Transverse colon (tissue), 4 donors: ENCODE measurements at regions of chr17 and their contacts with region 1.

Region 1: DNA sequence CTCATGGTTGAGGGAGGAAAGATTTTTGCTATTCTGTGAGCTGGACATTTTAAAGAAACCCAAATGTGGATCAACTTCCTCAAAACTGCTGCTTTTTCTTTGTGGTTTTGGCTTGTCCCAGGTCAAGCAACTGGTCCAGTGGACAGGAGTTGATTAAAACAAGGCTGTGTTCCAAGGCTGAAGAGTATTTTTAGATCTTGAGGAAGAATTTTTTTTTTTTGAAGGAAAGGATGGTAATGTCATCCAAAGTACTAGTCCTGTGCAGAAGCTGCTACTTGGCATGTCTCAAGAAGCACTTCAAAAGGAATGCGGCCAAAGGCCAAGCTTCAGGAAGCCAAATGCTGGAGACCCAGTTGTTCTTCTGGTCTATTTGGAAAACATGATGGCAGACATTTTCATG is 8.0 kb upstream of the MYH2 start:
- DNase-seq: no peak
- H3K4me3 ChIP-seq: no peak overlapping the region
- H3K27ac ChIP-seq: no peak overlapping the region
- H3K4me1 ChIP-seq: no peaks in the 10 kb centered on the region
- H3K27me3 ChIP-seq: no peaks in the 10 kb centered on the region
- CTCF ChIP-seq: no peak
- EP300 ChIP-seq: no peak
- POLR2A ChIP-seq: no peak

Region 2: GRCh38 chr17:10295728-10296343 is 261.6 kb before region 1 on chr17:
- in situ Hi-C with region 1: no loop called
- intact Hi-C with region 1: no loop called
- DNase-seq: peak; percentile 29
- H3K4me3 ChIP-seq: no peak overlapping the region
- H3K27ac ChIP-seq: no peak overlapping the region
- H3K4me1 ChIP-seq: no peaks in the 10 kb centered on the region
- H3K27me3 ChIP-seq: peaks cover 10% of the 10 kb centered on the region
- CTCF ChIP-seq: peak; percentile 40 to 58 (median 54)
- EP300 ChIP-seq: no peak
- POLR2A ChIP-seq: no peak

Region 3: GRCh38 chr17:10327640-10328039 is 229.8 kb before region 1 on chr17:
- in situ Hi-C with region 1: loop called in 1 of 4 experiments (anchors 25 kb)
- intact Hi-C with region 1: no loop called
- DNase-seq: peak; percentile 84
- H3K4me3 ChIP-seq: no peak overlapping the region
- H3K27ac ChIP-seq: no peak overlapping the region
- H3K4me1 ChIP-seq: no peaks in the 10 kb centered on the region
- H3K27me3 ChIP-seq: no peaks in the 10 kb centered on the region
- CTCF ChIP-seq: peak; percentile 87 to 96 (median 93)
- EP300 ChIP-seq: no peak
- POLR2A ChIP-seq: no peak

Region 4: GRCh38 chr17:10652984-10653659 is 95.7 kb after region 1 on chr17:
- in situ Hi-C with region 1: loop called in 1 of 4 experiments (anchors 25 kb)
- intact Hi-C with region 1: no loop called
- DNase-seq: no peak
- H3K4me3 ChIP-seq: no peak overlapping the region
- H3K27ac ChIP-seq: no peak overlapping the region
- H3K4me1 ChIP-seq: no peaks in the 10 kb centered on the region
- H3K27me3 ChIP-seq: no peaks in the 10 kb centered on the region
- CTCF ChIP-seq: no peak
- EP300 ChIP-seq: no peak
- POLR2A ChIP-seq: no peak